Breast epithelium (tissue), 4 donors: ENCODE measurements at regions of chrX and their contacts with region 1.

Region 1: GRCh38 chrX:103774070-103774642 is 2.5 kb upstream of the PLP1 start:
- DNase-seq: no peak
- H3K4me3 ChIP-seq: no peak overlapping the region
- H3K27ac ChIP-seq: no peak overlapping the region
- H3K4me1 ChIP-seq: no peaks in the 10 kb centered on the region
- H3K27me3 ChIP-seq: peaks cover 0 to 76% of the 10 kb centered on the region in 2 donors
- CTCF ChIP-seq: peak in 2 of 3 donors; percentile 37 to 51
- POLR2A ChIP-seq: no peak

Region 2: DNA sequence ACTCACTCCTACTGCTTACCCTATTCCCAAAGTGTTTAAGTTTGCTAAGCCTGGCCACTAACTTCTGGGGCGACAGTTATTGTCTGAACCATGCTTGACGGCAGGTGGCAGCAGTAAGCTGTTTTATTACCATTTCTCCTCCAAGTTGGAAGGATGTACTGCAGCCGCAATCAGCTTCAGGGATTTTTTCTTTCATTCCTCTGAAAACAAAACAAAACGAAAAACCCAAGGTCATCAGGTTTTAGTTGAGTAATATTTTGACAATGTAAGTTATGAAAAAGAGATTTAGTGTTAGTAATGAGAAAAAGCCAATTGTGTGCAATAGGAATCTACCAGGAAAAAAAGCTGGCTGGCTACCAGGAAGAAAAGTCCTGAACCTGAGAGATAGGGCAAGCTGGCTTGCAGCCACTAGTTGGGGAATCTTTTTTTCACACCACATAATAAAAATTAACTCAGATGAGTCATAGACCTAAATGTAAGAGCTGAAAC is 71.1 kb after region 1 on chrX:
- intact Hi-C with region 1: no loop called
- DNase-seq: peak; percentile 33 to 47
- H3K4me3 ChIP-seq: no peak overlapping the region
- H3K27ac ChIP-seq: no peak overlapping the region
- H3K4me1 ChIP-seq: no peaks in the 10 kb centered on the region
- H3K27me3 ChIP-seq: peaks cover 0 to 36% of the 10 kb centered on the region in 2 donors
- CTCF ChIP-seq: peak; percentile 42 to 62 (median 51)
- POLR2A ChIP-seq: no peak

Region 3: DNA sequence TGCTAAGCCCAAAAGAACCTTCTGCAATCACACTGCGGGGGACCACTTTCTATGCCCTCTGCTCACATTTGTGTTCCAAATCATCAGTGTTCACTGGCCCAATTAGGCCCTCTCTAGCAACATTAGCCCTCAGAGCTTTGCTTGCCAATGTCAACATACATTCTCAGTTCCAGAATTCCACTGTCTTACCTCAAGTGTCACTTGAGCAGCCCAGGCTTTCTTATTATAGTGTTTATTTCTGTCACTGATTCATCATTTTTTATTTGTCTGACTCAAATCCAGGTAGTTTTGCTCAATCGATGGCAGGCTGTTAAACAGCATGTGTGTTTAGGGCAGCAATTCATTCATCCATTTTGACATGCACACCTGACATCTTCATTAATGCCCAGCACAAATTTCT is 1155.2 kb after region 1 on chrX:
- intact Hi-C with region 1: loop called (anchors 5 kb)
- DNase-seq: no peak
- H3K4me3 ChIP-seq: no peak overlapping the region
- H3K27ac ChIP-seq: no peak overlapping the region
- H3K4me1 ChIP-seq: no peaks in the 10 kb centered on the region
- H3K27me3 ChIP-seq: peaks cover 0 to 42% of the 10 kb centered on the region in 2 donors
- CTCF ChIP-seq: no peak
- POLR2A ChIP-seq: no peak